HEK293 (cell line): ENCODE measurements at regions of chr2 and their contacts with region 1.

Region 1: DNA sequence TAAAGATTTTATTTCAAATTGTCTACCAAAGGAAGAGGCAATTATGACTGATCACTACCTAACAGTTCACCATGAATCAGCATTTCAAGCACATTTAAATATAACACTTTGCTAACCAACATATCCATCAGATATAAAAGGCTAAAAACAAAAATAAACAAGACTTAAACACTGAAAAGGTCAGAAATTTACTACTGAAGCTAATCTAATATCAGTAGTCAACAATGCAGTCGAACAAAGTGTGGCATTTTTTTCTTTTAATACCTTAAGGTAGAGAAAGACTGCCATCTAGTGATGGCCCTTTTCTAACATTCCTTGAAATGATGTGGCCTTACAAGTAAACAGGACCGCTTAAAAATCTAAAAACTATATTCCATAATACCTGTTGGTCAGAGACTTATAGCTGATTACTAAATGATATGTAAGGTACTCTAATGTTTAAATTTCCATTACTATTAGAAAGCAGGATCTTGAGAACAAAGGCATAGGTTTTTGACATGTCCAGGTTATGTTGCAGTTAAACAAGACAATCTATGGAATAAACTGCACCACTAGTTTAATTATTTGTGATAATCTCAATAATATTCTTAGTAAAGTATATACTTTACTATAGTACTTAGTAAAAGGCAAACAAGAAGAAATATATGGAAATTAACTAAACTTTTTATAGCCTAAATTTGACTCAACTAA is 80.0 kb downstream of the EXOC6B start:
- H3K4me3 ChIP-seq: no peak overlapping the region
- H3K27ac ChIP-seq: no peak overlapping the region
- H3K4me1 ChIP-seq: no peaks in the 10 kb centered on the region
- CTCF ChIP-seq: peak; percentile 36; the same call in 1 of the 2 replicates

Region 2: GRCh38 chr2:72757177-72757775 is 11.5 kb after region 1 on chr2:
- CTCF ChIA-PET with region 1: interaction called, 10 read pairs
- POLR2A ChIA-PET with region 1: no interaction called
- H3K4me3 ChIP-seq: no peak overlapping the region
- H3K27ac ChIP-seq: no peak overlapping the region
- H3K4me1 ChIP-seq: peaks cover 15% of the 10 kb centered on the region; the same call in 1 of the 2 replicates
- CTCF ChIP-seq: no peak

Region 3: GRCh38 chr2:72846538-72847095 is 100.8 kb after region 1 on chr2:
- CTCF ChIA-PET with region 1: no interaction called
- POLR2A ChIA-PET with region 1: no interaction called
- H3K4me3 ChIP-seq: no peak overlapping the region
- H3K27ac ChIP-seq: no peak overlapping the region
- H3K4me1 ChIP-seq: no peaks in the 10 kb centered on the region
- CTCF ChIP-seq: no peak